AG04449 (cell line): ENCODE measurements at regions of chr14 and their contacts with region 1.

Region 1: DNA sequence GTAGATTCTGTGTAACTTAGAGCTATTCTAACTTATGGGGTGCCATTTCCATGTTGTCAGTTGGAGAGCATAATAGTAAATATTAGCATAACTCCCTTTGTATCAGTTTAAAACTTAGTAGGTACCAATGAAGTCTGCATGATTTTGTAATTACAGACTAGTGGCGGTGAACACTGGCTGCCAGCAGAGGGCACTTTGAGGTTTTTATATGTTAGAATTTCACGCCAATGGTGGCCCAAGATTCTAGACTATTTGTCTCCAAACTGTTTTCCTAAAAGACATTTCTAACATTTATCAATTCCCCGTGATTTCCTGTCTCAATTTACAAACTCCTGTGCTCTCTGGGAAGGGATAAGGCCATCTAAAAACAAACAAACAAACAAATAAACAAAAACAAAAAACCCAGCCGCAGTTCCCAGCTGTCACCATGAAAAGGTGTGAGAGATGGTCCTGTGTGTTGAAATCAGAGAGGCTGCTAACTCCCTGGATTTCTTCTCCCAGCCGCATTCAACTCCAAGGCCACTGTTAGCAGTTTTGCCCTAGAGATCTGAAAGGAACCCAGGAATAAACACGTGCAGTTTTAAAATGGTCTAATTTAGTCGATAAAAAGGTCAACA is 57.6 kb downstream of the BRMS1L start:
- DNase-seq: no peak
- H3K4me3 ChIP-seq: no peak overlapping the region
- CTCF ChIP-seq: peak; percentile 54

Region 2: GRCh38 chr14:35750202-35750904 is 133.4 kb before region 1 on chr14:
- CTCF ChIA-PET with region 1: no interaction called
- POLR2A ChIA-PET with region 1: no interaction called
- DNase-seq: no peak
- H3K4me3 ChIP-seq: no peak overlapping the region
- CTCF ChIP-seq: no peak

Region 3: GRCh38 chr14:35789651-35790050 is 94.1 kb before region 1 on chr14:
- CTCF ChIA-PET with region 1: no interaction called
- POLR2A ChIA-PET with region 1: no interaction called
- DNase-seq: peak; percentile 38
- H3K4me3 ChIP-seq: no peak overlapping the region
- CTCF ChIP-seq: no peak

Region 4: DNA sequence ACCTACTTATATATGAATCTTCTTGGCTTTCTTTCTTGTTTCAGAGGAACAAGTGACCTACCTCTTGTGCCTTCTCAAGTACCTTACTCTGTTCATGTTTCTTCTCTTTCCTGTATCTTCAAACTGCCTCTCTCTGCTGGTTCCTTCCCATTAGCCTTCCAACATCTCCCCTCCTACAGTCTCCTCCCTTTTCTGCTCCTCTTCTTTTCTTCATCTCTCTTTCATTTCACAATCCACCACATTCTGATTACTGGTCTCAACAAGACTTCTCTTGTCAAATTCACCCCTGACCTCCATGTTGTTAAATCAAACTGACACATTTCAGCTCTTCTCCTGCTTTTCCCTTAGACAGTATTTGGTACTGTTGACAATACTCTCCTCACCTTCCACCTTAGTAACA is 38.0 kb after region 1 on chr14:
- CTCF ChIA-PET with region 1: no interaction called
- POLR2A ChIA-PET with region 1: no interaction called
- DNase-seq: no peak
- H3K4me3 ChIP-seq: no peak overlapping the region
- CTCF ChIP-seq: no peak

Region 5: GRCh38 chr14:35979531-35979930 is 95.7 kb after region 1 on chr14:
- CTCF ChIA-PET with region 1: no interaction called
- POLR2A ChIA-PET with region 1: no interaction called
- DNase-seq: no peak
- H3K4me3 ChIP-seq: no peak overlapping the region
- CTCF ChIP-seq: no peak

Region 6: DNA sequence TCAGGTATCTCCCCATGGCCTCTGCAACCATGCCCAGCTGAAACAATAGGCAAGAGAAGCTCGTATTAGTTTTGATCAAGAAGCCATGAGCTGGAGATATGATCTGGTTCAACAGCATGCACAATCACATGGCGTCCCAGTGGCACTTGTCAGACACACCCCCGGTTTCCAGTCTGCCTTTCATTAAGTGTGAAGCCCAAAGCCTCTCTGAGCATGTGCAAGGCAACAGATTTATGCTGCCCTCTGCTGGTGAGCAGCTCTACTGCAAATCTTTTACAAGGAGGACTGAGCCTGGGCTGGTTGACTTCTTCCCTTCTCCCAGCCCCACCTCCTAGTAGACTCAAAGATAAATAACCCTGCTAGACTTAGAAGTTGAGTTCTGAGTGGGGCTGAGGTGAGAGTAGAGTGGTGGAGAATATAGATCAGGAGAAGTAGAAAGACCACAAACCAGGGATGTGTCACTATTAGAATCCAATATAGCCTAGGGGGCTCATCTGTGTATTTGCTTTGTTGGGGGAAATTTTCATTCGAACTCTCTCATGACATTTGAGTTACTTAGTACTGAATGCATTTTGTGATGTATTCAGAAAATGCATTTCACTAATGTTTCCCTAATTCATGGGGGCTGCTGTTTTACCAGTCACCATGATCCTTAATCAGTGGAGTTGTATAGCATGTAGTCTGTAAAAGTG is 490.3 kb after region 1 on chr14:
- CTCF ChIA-PET with region 1: interaction called, 16 read pairs
- POLR2A ChIA-PET with region 1: no interaction called
- DNase-seq: peak; percentile 21
- H3K4me3 ChIP-seq: no peak overlapping the region
- CTCF ChIP-seq: peak; percentile 86